ENCODE measurements at regions of chr17 and their contacts with region 1.

Region 1: GRCh38 chr17:45001310-45001709 is 33.2 kb upstream of the C1QL1 start:
- DNase-seq: no peak
- ATAC-seq: no peak
- H3K4me3 ChIP-seq: no peak overlapping the region
- H3K27ac ChIP-seq: no peak overlapping the region
- H3K4me1 ChIP-seq: no peaks in the 10 kb centered on the region
- H3K27me3 ChIP-seq: no peaks in the 10 kb centered on the region
- CTCF ChIP-seq: no peak

Region 2: GRCh38 chr17:44722254-44722653 is 279.1 kb before region 1 on chr17:
- CTCF ChIA-PET with region 1: no interaction called
- POLR2A ChIA-PET with region 1: no interaction called
- in situ Hi-C with region 1: no loop called
- intact Hi-C with region 1: no loop called
- DNase-seq: no peak
- ATAC-seq: no peak
- H3K4me3 ChIP-seq: no peak overlapping the region
- H3K27ac ChIP-seq: no peak overlapping the region
- H3K4me1 ChIP-seq: no peaks in the 10 kb centered on the region
- H3K27me3 ChIP-seq: no peaks in the 10 kb centered on the region
- CTCF ChIP-seq: no peak

Region 3: DNA sequence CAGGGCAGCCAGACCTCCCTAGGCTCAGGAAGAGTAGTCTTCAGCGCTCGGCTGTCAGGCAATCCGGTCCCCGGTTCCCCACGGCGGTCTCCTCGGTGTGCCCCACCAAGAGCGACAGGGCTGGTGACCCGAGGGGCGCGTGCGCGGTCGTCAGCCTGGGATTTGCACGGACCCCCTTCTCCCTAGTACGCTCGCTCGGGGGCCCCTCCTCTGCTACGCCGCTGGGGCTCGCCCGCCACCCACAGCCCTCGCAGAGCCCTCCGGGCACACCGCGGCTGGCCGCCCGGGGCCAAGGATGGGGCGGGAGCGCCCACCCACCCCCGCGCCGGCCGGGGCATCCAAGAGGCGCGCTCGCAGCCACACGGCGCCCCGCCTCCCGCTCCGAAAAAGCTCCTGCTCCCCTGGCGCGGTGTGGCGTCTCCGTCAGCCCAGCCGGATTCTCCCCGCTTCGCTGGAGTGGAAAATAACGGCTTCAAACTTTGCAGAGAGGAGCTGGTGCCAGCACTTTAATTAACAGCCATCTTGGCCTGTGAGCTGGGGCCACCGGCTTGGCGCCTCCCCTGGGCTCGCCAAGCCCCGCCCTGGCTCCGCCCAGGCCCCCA is 31.1 kb before region 1 on chr17:
- CTCF ChIA-PET with region 1: interaction called, 17 read pairs
- POLR2A ChIA-PET with region 1: no interaction called
- in situ Hi-C with region 1: no loop called
- intact Hi-C with region 1: no loop called
- DNase-seq: no peak
- ATAC-seq: no peak
- H3K4me3 ChIP-seq: peak overlapping the region in 1 of 2 experiments; percentile 25; a peak in 1 of 4 replicates
- H3K27ac ChIP-seq: no peak overlapping the region
- H3K4me1 ChIP-seq: no peaks in the 10 kb centered on the region
- H3K27me3 ChIP-seq: no peaks in the 10 kb centered on the region
- CTCF ChIP-seq: no peak

Region 4: DNA sequence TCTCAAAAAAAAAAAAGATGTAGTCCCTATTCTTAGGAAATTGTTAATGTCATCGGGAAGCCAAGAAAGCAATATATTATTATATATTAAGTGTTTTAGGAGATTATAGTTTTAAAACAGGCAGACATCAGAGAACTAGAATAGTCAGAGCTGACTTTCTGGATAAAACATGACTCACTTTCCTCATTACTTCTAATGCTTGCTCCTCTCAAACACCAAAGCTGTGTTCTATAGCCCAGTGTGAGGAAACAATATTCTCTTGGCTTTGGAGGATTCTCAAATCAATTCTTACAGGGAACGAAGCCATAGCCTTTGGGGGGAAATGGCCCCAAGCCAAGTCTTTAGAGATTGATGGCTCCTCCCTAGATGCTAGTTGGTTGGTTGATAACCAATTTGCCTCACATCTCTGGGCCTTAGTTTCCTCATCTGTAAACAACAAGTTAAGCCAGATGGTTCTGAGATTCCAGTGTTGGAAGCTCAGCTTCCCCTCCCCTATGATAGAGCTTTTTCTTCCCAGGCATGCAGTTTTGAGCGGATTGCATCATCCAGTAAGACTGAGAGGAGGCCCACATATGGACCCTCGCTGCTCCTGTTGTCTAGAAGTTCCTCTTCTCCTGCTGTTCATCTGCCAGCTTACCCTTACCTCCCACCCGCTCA is 72.2 kb after region 1 on chr17:
- CTCF ChIA-PET with region 1: no interaction called
- POLR2A ChIA-PET with region 1: no interaction called
- in situ Hi-C with region 1: no loop called
- intact Hi-C with region 1: no loop called
- DNase-seq: no peak
- ATAC-seq: no peak
- H3K4me3 ChIP-seq: no peak overlapping the region
- H3K27ac ChIP-seq: no peak overlapping the region
- H3K4me1 ChIP-seq: no peaks in the 10 kb centered on the region
- H3K27me3 ChIP-seq: no peaks in the 10 kb centered on the region
- CTCF ChIP-seq: no peak